ENCODE measurements at regions of chr22 and their contacts with region 1.

Region 1: GRCh38 chr22:21938071-21938822 is 14.4 kb downstream of the PPM1F start:
- DNase-seq: peak; percentile 94 to 98 (median 97)
- ATAC-seq: peak; percentile 89 to 91
- H3K4me3 ChIP-seq: peak overlapping the region; percentile 56
- H3K27ac ChIP-seq: peak overlapping the region; percentile 98
- H3K4me1 ChIP-seq: peaks cover 27% of the 10 kb centered on the region
- H3K27me3 ChIP-seq: no peaks in the 10 kb centered on the region

Region 2: DNA sequence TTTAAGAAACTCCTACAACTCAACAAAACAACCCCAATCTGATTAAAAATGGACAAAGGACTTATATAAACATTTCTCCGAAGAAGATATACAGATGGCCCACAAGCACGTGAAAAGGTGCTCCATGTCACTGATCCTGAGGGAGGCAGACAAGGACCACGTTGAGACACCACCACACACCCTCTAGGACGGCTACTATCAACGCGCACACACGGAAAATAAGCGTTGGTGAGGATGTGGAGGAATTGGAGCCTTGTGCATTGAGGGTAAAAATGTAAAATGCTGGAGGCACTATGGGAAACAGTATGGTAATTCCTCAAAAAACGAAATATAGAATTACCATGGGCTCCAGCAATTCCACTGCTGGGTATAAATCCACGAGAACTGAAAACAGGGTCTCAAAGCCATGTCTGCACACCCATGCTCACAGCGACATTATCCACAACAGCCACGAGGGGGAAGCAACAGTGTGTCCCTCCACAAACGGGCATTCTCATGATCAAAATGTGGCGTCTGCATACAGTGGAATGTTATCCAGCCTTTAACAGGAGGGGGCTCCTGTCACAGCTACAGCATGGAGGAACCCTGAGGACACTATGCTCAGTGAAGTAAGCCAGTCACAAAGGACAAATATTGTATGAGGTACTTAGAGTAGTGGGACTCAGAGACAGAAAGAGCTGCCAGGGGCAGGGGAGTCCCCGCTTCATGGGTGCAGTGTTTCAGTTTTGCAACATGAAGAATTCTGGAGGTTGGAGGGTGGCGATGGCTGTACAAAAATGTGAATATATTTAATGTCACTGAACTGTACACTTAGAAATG is 225.1 kb before region 1 on chr22:
- intact Hi-C with region 1: loop called in 3 of 4 experiments (anchors 1 to 5 kb)
- DNase-seq: peak; percentile 64 to 85 (median 77)
- ATAC-seq: peak; percentile 92 to 93
- H3K4me3 ChIP-seq: no peak overlapping the region
- H3K27ac ChIP-seq: no peak overlapping the region
- H3K4me1 ChIP-seq: no peaks in the 10 kb centered on the region
- H3K27me3 ChIP-seq: no peaks in the 10 kb centered on the region

Region 3: DNA sequence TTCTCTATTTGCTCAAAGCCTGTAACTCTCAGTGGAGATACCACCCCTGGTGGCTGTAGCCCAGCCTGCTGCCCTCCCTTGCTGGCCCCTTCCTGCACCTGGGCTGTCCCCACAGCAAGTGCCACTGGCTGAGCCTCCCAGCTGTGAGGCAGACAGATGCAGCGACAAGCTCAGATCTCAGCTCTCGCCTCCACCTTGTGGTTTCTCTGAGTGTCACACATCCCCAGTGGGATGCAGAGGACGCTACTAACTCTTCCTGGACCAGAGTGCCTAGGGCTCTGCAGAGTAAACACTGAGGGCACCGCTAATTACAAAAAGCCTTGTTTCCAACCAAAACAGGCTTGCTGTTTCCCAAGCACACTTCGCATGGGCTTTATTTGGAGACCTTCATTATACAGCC is 211.6 kb before region 1 on chr22:
- intact Hi-C with region 1: loop called in 1 of 4 experiments (anchors 5 kb)
- DNase-seq: no peak
- ATAC-seq: peak in 1 of 2 donors; percentile 24
- H3K4me3 ChIP-seq: no peak overlapping the region
- H3K27ac ChIP-seq: no peak overlapping the region
- H3K4me1 ChIP-seq: no peaks in the 10 kb centered on the region
- H3K27me3 ChIP-seq: no peaks in the 10 kb centered on the region

Region 4: DNA sequence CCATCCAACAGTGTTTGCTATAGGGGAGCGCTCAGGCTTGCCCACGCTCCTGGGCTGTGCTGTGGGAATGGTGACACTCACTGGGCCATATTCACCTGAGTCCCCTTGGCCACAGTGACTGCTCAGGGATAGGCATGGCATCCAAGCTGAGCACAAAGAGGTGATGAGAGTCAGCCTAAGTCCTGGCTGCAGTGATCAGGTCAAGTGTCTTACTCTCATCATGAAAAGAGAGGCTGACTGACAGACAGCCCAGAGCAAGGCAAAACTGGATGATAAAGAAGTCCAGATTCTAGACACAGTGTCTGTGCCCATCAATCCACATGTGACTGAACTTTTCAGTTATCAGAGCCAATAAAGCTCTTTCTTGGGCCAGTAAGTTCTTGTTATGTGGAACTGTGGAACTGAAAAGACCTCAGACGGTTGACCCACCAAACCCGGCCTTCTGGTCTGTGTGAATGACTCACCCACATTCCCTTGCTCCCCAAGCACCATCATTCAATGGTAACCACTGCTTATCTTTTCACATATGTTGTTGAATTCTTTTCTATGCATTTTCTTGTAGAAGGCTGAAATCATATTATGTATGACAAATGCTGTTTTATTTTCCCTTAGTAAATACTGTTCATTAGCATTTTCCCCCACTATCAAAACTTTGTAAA is 159.4 kb before region 1 on chr22:
- intact Hi-C with region 1: loop called in 1 of 4 experiments (anchors 10 kb)
- DNase-seq: no peak
- ATAC-seq: no peak
- H3K4me3 ChIP-seq: no peak overlapping the region
- H3K27ac ChIP-seq: no peak overlapping the region
- H3K4me1 ChIP-seq: no peaks in the 10 kb centered on the region
- H3K27me3 ChIP-seq: no peaks in the 10 kb centered on the region

Region 5: GRCh38 chr22:21961886-21962654 is 23.8 kb after region 1 on chr22:
- intact Hi-C with region 1: no loop called
- DNase-seq: peak in 1 of 3 donors; percentile 54
- ATAC-seq: peak in 1 of 2 donors; percentile 4
- H3K4me3 ChIP-seq: no peak overlapping the region
- H3K27ac ChIP-seq: no peak overlapping the region
- H3K4me1 ChIP-seq: no peaks in the 10 kb centered on the region
- H3K27me3 ChIP-seq: no peaks in the 10 kb centered on the region

Region 6: GRCh38 chr22:21996175-21996720 is 58.0 kb after region 1 on chr22:
- intact Hi-C with region 1: no loop called
- DNase-seq: no peak
- ATAC-seq: no peak
- H3K4me3 ChIP-seq: no peak overlapping the region
- H3K27ac ChIP-seq: no peak overlapping the region
- H3K4me1 ChIP-seq: no peaks in the 10 kb centered on the region
- H3K27me3 ChIP-seq: no peaks in the 10 kb centered on the region

Measured in right cardiac atrium (tissue), 5 donors.